ENCODE measurements at regions of chr18 and their contacts with region 1.

Region 1: GRCh38 chr18:63025251-63026090 is 294.1 kb downstream of the BCL2 start:
- DNase-seq: peak; percentile 37
- ATAC-seq: peak; percentile 80

Region 2: DNA sequence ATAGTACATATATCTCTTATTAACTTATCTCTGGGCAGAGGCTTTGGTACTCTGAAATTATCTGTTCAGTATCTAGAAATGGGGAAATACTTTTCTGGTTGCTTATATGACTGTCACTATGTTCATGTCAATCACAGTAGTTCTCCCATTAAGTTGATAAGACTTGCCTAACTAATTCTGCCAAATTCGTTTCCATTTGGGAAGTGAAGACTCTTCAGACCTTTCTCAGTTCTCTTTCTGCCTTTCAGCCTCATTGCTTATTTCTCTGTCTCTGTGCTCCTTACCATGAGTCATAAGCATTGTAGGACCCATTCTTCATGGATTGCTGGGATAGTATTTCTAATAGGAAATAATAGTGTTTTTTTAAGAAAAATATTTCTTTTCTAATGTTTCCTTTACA is 196.6 kb before region 1 on chr18:
- intact Hi-C with region 1: no loop called
- DNase-seq: no peak
- ATAC-seq: no peak

Region 3: GRCh38 chr18:63155169-63155852 is 129.8 kb after region 1 on chr18:
- intact Hi-C with region 1: loop called (anchors 10 kb)
- DNase-seq: peak; percentile 63
- ATAC-seq: peak; percentile 89